ENCODE measurements at regions of chr14 and their contacts with region 1.

Region 1: GRCh38 chr14:33839193-33840076 is 111.4 kb downstream of the EGLN3 start:
- DNase-seq: no peak
- H3K4me3 ChIP-seq: no peak overlapping the region
- H3K27ac ChIP-seq: no peak overlapping the region
- H3K4me1 ChIP-seq: peaks cover 0 to 6% (median 0%) of the 10 kb centered on the region in 3 donors
- H3K27me3 ChIP-seq: no peaks in the 10 kb centered on the region
- CTCF ChIP-seq: peak; percentile 69 to 83 (median 76)
- POLR2A ChIP-seq: no peak

Region 2: DNA sequence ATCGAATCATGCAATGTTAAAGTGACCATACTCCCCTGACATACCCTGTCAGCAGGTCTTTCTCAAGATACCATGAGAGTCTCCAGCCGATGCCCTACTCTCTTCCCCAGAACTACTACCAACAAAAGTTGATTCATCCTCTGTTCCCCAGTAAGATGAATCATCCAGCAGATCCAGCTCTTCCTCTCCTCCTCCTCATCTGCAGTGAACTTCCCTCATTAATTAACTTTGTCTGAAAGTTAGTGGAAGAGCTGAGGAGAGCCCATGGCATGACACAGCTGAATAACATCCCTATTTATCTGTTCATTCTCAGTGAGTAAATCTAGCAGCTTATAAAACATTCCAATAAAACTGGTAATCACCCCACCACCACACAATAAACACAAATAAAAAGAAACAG is 102.0 kb before region 1 on chr14:
- intact Hi-C with region 1: no loop called
- DNase-seq: no peak
- H3K4me3 ChIP-seq: no peak overlapping the region
- H3K27ac ChIP-seq: no peak overlapping the region
- H3K4me1 ChIP-seq: no peaks in the 10 kb centered on the region
- H3K27me3 ChIP-seq: no peaks in the 10 kb centered on the region
- CTCF ChIP-seq: no peak
- POLR2A ChIP-seq: no peak

Region 3: DNA sequence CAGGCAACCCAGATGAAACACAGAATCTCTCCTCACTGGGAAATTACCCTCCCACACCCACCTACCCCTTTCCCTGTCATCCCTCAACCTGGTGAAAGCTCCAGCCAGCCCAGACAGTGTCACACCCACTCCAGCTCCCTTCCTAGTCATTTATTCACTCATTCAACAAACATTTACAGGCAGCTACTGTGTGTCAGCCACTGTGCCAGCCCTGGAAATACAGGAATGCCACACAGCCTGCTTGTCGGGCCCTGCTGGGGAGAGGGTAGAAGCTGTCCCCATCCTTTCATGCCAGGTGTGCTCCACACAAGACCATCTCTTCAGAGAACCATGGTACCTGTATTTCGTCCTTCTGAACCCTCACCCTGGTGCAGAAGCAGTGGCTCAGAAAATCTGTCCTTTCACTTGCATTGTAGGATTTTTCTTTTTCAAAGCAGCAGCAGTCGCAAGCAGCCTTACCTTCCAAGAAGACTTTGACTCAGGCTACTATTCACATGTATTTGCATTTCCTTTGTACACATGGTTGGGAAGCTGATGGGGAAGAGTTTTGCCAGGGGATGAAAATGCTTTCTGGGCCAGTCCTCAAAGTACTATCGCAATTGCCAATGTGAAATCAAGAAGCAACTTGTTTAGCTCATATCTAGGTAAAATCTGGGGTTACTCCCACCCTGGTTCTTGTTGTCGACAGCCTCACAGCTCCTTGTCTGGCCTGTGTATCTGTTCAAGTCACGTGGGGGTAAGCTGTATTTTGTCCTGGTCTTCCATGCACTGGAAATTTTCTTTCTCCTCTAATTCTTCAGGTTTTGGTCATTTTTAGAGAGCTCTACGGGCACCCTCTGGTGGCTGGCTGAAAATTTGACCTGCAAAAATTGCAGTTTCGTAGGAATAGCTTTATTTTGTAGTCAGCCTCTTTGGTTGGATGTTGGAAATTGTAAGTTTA is 258.9 kb after region 1 on chr14:
- intact Hi-C with region 1: loop called (anchors 5 kb)
- DNase-seq: no peak
- H3K4me3 ChIP-seq: no peak overlapping the region
- H3K27ac ChIP-seq: peak overlapping the region in 1 of 4 donors; percentile 0
- H3K4me1 ChIP-seq: peaks cover 0 to 17% (median 0%) of the 10 kb centered on the region in 3 donors
- H3K27me3 ChIP-seq: peaks cover 0 to 5% (median 0%) of the 10 kb centered on the region in 4 donors
- CTCF ChIP-seq: peak in 5 of 6 experiments; percentile 49 to 66 (median 64)
- POLR2A ChIP-seq: no peak

Region 4: DNA sequence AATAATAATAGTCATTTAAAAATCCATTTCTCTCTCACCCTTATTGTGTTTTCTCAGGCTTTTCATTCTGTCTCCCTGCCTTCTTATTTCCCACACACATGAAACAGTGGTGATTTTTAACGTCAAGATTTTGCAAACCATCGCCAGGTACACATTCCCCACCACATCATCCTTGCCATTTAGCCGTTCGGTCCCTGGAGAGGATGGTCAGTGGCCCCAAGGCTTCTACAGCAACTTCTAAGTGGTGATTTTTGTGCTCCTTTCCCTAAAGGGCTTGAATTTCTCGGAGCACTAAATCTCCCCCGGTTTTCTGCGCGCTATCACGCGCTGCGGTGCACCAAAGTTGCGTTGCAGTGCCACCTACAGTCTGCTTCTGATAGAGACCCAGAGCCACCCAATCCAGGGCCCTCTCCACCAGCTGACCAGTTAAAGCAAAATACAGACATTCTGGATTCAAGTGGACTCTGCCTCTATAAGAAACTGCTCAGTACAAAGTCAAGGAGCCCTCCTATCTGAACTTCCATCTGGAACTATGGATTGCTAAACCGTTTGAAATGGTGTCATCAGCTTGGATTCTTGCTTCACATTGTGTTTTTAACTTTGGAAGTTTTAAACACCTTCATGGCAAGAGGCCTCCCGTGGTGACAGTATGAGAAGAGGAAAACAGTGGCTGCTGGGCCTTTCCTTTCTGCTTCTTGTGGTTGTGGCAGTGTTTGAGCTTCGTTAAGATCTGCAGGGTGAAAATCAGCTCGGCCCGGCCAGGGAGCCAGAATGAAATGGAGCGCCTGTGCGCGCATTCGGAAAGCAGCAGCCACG is 388.6 kb after region 1 on chr14:
- intact Hi-C with region 1: loop called (anchors 10 kb)
- DNase-seq: no peak
- H3K4me3 ChIP-seq: peak overlapping the region in 1 of 4 donors; percentile 40
- H3K27ac ChIP-seq: no peak overlapping the region
- H3K4me1 ChIP-seq: peaks cover 0 to 14% (median 0%) of the 10 kb centered on the region in 3 donors
- H3K27me3 ChIP-seq: no peaks in the 10 kb centered on the region
- CTCF ChIP-seq: peak; percentile 45 to 87 (median 74)
- POLR2A ChIP-seq: no peak

Region 5: GRCh38 chr14:34300882-34301734 is 461.7 kb after region 1 on chr14:
- intact Hi-C with region 1: loop called (anchors 5 kb)
- DNase-seq: no peak
- H3K4me3 ChIP-seq: no peak overlapping the region
- H3K27ac ChIP-seq: no peak overlapping the region
- H3K4me1 ChIP-seq: peaks cover 0 to 16% (median 10%) of the 10 kb centered on the region in 3 donors
- H3K27me3 ChIP-seq: no peaks in the 10 kb centered on the region
- CTCF ChIP-seq: peak in 5 of 6 experiments; percentile 44 to 79 (median 60)
- POLR2A ChIP-seq: no peak